Astrocyte of the cerebellum (primary cell): ENCODE measurements at regions of chr20 and their contacts with region 1.

Region 1: GRCh38 chr20:10553326-10553984 is 118.3 kb downstream of the SLX4IP start:
- DNase-seq: peak; percentile 73
- H3K4me3 ChIP-seq: no peak overlapping the region
- CTCF ChIP-seq: peak; percentile 80

Region 2: DNA sequence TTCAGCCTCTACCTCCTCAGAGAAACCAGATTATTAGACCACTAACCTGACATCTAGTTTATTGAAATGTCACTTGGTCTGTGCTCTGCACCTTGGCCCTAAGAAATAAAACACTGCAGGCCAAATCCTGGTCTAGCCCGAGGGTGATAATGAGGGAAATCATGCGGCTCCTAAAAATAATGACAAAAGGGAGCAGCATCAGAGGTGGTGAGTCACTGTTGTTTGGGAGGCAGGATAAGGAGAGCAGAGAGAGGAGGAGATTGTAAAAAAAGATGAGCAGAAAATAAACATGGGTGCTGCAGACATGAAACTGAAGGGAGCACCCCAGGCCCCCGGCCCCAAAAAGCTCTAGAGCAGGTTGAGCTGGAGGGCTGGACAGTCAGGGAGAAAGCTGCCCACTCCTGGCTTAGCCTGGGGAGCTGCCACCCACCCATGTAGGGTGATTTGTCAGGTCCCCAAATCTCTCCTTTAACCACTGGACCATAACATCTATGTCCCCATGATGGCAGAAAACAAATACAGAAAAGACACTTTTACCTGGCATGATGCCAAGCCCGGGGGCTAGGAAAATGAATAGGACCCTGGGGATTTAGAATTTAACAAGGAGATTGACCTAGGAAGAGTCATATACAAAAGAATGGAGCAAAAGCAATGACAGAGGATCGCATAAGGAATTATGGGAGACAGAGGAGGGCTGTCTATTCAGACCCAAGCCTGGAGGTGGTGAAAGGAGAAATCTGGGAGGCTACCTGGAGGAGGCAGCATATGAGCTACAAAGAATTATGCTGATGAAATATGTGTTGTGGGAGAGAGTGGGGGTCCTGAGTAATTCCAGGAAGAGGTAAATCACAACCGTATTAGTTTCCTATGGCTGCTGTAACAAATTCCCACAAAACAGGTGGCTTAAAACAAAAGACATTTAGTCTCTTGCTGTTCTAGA is 231.1 kb before region 1 on chr20:
- in situ Hi-C with region 1: no loop called
- DNase-seq: no peak
- H3K4me3 ChIP-seq: no peak overlapping the region
- CTCF ChIP-seq: no peak

Region 3: DNA sequence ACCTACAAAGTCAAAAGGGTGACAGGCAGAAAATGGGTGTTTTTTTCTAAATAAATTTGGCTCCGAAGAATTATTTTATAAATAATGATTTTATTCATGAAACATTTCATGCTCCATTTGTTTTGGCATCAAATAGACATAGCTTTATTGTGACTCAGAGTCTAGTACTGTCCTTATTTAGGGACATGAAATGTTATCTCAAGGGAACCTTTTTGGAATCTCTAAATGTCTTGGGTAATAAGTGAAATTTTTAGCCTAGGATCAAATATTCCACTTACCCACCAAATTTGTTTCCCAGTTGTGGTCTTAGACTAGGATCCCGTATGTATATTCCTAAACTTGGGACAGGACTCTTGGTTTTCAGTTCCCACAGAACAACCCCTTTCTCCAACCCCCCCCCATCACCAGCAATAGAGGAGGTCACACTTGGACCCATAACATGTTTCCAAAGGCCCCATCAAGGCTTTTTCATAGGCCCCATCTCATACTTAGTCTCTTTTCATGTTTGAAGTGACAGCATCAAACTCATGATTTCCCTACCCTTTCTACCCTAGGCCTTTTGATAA is 38.6 kb after region 1 on chr20:
- in situ Hi-C with region 1: no loop called
- DNase-seq: no peak
- H3K4me3 ChIP-seq: no peak overlapping the region
- CTCF ChIP-seq: no peak

Region 4: DNA sequence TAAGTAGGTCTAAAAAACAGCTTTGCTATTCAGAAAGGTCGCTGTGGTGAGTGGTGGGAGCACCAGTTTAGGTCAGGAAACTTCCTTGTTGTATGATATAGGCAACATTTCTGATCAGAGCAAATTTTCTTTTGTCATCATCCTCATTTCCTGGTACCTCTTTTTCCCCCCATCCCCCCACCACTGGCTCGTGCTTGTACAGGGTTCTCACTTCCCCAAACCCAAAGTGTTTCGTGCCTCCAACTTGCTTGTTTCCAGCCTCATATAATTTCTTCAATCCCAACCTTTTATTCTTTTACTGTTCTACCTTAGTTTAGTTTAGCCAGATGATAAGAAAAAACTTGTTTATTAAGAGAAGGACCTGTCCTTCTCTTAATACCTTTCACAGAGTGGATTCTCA is 329.7 kb after region 1 on chr20:
- in situ Hi-C with region 1: no loop called
- DNase-seq: no peak
- H3K4me3 ChIP-seq: no peak overlapping the region
- CTCF ChIP-seq: no peak

Region 5: GRCh38 chr20:11544029-11544678 is 990.7 kb after region 1 on chr20:
- in situ Hi-C with region 1: loop called (anchors 5 kb)
- DNase-seq: peak; percentile 75
- H3K4me3 ChIP-seq: no peak overlapping the region
- CTCF ChIP-seq: peak; percentile 31